Caco-2 (cell line): ENCODE measurements at regions of chr5 and their contacts with region 1.

Region 1: GRCh38 chr5:135174315-135175096 is 140.5 kb upstream of the PITX1 start:
- DNase-seq: no peak
- H3K4me3 ChIP-seq: no peak overlapping the region
- H3K4me3 Mint-ChIP-seq: no peak overlapping the region
- H3K27ac Mint-ChIP-seq: peak overlapping the region; percentile 88
- H3K4me1 ChIP-seq: peaks cover 25% of the 10 kb centered on the region
- H3K4me1 Mint-ChIP-seq: peaks cover 31% of the 10 kb centered on the region
- H3K27me3 ChIP-seq: no peaks in the 10 kb centered on the region
- H3K27me3 Mint-ChIP-seq: no peaks in the 10 kb centered on the region
- CTCF ChIP-seq: no peak

Region 2: GRCh38 chr5:135157421-135158313 is 16.8 kb before region 1 on chr5:
- CTCF ChIA-PET with region 1: interaction called, 4 read pairs
- POLR2A ChIA-PET with region 1: no interaction called
- intact Hi-C with region 1: loop called (anchors 1 kb)
- DNase-seq: no peak
- H3K4me3 ChIP-seq: no peak overlapping the region
- H3K4me3 Mint-ChIP-seq: peak overlapping the region; percentile 30
- H3K27ac Mint-ChIP-seq: peak overlapping the region; percentile 84
- H3K4me1 ChIP-seq: peaks cover 50% of the 10 kb centered on the region
- H3K4me1 Mint-ChIP-seq: peaks cover 50% of the 10 kb centered on the region
- H3K27me3 ChIP-seq: no peaks in the 10 kb centered on the region
- H3K27me3 Mint-ChIP-seq: no peaks in the 10 kb centered on the region
- CTCF ChIP-seq: no peak